Uterus (tissue), 4 donors: ENCODE measurements at regions of chr19 and their contacts with region 1.

Region 1: GRCh38 chr19:48970923-48971395 is 5.8 kb downstream of the FTL start:
- DNase-seq: peak; percentile 81 to 83
- H3K4me3 ChIP-seq: no peak overlapping the region
- H3K27ac ChIP-seq: peak overlapping the region; percentile 45 to 47
- H3K4me1 ChIP-seq: peaks cover 0 to 11% of the 10 kb centered on the region in 2 donors
- H3K27me3 ChIP-seq: no peaks in the 10 kb centered on the region
- CTCF ChIP-seq: peak; percentile 80 to 92 (median 84)
- POLR2A ChIP-seq: no peak

Region 2: DNA sequence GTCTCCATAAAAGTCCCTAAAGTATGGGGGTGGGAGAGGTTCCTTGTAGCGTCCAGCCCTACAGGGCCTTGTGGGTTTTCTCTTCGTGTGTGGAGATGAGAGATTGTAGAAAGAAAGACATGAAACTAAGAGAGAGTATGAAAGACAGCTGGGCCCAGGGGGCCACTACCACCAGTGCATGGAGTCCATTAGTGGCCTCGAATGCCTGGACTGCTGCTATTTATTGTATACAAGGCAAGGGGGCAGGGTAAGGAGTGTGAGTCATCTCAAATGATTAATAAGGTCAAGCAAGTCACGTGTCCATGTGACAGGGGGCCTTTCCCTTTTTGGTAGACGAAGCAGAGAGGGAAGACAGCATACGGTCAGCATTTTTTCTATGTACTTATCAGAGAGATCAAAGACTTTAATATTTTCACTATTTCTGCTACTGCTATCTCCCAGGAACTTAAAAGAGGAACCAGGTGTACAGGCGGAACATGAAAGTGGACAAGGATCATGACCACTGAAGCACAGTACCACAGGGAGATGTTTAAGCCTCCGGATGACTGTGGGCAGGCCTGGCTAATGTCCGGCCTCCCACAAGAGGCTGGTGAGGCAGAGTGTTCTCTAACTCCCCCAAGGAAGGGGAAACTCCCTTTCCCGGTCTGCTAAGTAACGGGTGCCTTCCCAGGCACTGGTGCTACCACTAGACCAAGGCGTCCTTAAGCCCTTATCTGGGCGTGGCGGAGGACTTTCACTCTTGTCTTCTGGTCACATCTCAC is 190.1 kb before region 1 on chr19:
- intact Hi-C with region 1: loop called (anchors 10 kb)
- DNase-seq: peak; percentile 41 to 52
- H3K4me3 ChIP-seq: no peak overlapping the region
- H3K27ac ChIP-seq: peak overlapping the region; percentile 69 to 76
- H3K4me1 ChIP-seq: peaks cover 0 to 2% of the 10 kb centered on the region in 2 donors
- H3K27me3 ChIP-seq: no peaks in the 10 kb centered on the region
- CTCF ChIP-seq: no peak
- POLR2A ChIP-seq: no peak